GM18951 (cell line): ENCODE measurements at regions of chr15 and their contacts with region 1.

Region 1: DNA sequence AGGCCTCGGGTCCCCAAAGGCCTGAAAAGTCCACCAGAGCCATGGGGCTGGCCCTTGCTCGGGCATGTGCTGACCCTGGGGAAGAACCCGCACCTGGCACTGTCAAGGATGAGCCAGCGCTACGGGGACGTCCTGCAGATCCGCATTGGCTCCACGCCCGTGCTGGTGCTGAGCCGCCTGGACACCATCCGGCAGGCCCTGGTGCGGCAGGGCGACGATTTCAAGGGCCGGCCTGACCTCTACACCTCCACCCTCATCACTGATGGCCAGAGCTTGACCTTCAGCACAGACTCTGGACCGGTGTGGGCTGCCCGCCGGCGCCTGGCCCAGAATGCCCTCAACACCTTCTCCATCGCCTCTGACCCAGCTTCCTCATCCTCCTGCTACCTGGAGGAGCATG is 1.2 kb downstream of the CYP1A2 start:
- POLR2A ChIP-seq: no peak

Region 2: GRCh38 chr15:74573987-74574386 is 175.8 kb before region 1 on chr15:
- in situ Hi-C with region 1: no loop called
- POLR2A ChIP-seq: no peak

Region 3: DNA sequence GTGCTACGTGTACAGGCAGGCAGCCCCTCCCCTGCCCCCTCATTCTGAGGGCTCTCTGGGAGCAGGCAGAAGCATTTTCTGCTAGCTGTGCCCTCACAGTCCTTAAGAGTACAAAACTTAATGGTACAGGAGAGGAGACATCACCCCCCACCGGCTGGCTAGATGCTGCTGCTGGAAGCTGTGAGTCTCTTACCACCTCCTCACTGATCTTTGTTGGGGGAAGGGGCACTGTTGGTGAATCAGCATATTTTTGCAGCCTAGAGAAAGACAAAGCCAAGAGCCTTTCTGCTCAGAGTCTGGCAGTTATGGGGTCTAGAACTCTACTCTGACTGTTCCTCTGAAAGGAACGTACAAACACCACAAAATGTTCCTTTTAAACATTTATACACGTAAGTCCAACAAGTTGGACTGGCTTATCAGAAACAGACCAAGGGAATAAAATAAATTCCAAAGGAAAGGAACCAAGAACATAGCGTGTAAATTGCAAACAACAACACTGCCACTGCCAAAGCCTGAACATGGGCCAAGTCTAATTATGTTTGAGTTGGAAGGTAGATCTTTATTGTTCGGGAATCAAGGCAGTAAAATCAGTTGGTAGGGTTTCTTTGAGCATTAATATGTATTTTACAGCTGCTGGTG is 107.0 kb before region 1 on chr15:
- in situ Hi-C with region 1: loop called (anchors 5 kb)
- POLR2A ChIP-seq: no peak